Kidney (tissue), 22 donors: ENCODE measurements at regions of chr2 and their contacts with region 1.

Region 1: DNA sequence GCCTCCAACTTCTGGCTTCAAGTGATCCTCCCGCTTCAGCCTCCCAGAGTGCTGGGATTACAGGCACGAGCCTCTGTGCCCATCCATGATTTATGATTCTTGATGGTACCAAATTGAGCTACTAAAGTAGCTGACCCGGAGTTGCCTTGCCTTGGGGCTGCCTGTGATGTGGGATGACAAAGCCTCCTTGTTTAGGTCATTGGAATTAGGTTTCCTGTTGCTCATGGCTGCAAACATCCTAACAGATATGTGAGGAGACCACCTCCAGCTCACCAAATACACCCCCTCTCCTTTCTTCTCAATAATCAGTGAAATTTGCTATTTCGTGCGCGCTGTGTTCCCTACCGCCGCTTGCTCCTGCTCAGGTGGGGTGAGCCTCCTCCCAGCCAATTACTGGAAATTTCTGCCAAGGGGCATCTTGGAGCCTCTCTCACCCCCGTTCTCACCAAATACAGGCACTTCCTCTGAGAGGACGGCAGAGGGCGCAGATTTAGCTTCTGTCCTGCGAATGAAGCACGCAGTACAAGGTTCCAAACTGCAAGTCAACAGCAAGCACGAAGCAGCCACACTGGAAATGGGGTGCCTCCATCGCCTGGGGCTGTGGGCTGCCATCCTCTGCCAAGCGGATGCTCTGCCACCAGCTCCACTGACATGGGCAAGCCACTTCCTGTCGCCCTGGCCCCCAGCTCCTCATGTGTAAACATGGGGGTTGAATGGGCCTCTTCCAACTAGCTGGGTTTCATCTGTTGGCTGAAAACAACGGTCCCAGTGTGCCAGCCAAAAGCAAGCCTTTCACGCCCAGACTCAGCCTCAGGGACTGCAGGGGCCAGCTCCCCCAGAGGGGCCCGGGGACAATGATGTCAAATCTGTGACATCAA is 71.7 kb downstream of the NCAPH start:
- DNase-seq: peak in 4 of 5 donors; percentile 71 to 90 (median 75)
- H3K4me3 ChIP-seq: no peak overlapping the region
- H3K27ac ChIP-seq: no peak overlapping the region
- H3K4me1 ChIP-seq: peaks cover 5 to 14% (median 7%) of the 10 kb centered on the region in 3 donors
- H3K27me3 ChIP-seq: no peaks in the 10 kb centered on the region
- CTCF ChIP-seq: peak; percentile 91

Region 2: DNA sequence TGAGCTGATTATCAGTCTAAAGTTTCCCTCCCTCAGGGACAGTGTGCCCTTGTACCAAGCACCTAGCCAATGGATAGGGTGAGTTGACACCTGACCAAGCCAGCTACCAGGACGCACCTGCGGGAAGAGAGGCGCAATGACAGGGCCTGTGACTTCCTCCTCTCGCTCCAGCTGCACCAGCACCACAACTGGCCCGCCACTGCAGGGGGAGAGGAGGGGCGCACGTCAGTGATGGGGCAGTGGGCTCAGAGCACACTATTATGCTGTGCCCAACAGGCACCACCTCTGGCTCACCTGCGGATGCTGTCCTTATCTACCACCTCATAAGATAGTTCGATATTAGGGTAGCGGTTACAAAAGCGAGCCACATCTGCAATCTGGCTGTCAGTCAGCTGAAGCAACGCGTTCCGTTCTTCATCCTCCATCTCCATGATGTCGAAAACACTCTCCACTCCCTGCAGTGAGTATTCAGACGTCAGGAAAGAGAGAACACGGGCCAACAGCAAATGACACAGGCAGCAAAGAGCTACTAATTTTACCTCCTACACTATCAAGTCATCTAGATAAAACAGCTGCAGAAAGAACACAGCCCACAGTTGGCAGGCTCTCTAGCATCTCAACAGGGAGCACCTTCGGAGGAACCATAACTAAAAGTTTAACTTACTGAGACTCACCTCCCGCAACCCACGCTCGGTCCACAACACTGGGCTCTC is 130.3 kb before region 1 on chr2:
- intact Hi-C with region 1: no loop called
- DNase-seq: no peak
- H3K4me3 ChIP-seq: no peak overlapping the region
- H3K27ac ChIP-seq: no peak overlapping the region
- H3K4me1 ChIP-seq: peaks cover 0 to 11% (median 9%) of the 10 kb centered on the region in 3 donors
- H3K27me3 ChIP-seq: no peaks in the 10 kb centered on the region
- CTCF ChIP-seq: no peak

Region 3: DNA sequence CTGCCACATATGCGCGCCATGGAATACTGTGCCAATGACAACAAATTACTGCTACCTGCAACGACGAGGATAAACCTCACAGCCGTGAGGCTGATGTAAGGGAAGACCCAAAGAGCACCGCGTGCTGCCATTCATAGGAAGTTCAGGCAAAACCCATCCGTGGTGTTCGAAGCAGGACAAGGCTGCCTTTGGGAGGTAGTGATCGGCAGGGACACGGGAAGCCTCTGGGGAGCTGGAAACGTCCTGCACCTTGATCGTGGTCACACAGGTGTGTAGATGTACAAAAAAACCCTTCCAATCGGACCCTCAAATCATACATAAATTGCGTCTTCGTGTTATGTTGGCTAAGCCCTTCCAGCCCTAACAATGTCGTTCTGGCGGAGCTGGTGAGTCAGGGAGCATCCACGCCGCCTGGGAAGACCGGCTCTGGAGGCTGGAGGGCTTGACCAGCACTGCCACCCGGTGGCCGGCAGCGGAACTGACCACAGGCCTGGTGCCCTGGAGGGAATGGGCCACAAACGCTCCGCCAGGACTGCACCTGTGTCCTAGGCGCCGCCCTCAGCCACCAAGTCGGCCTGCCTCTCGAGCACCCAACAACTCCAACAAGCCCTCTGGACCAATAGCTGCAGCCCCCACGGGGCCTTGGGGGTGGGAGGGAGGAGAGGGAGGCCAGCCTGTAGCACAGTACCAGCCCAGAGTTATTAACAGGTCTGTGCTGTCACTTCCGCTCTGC is 102.0 kb after region 1 on chr2:
- intact Hi-C with region 1: loop called (anchors 10 kb)
- DNase-seq: peak; percentile 90 to 96 (median 93)
- H3K4me3 ChIP-seq: no peak overlapping the region
- H3K27ac ChIP-seq: no peak overlapping the region
- H3K4me1 ChIP-seq: peaks cover 5 to 34% (median 22%) of the 10 kb centered on the region in 3 donors
- H3K27me3 ChIP-seq: no peaks in the 10 kb centered on the region
- CTCF ChIP-seq: peak; percentile 99

Region 4: GRCh38 chr2:96523659-96524481 is 116.6 kb after region 1 on chr2:
- intact Hi-C with region 1: no loop called
- DNase-seq: peak in 2 of 5 donors; percentile 44 to 79
- H3K4me3 ChIP-seq: no peak overlapping the region
- H3K27ac ChIP-seq: no peak overlapping the region
- H3K4me1 ChIP-seq: peaks cover 0 to 3% (median 0%) of the 10 kb centered on the region in 3 donors
- H3K27me3 ChIP-seq: no peaks in the 10 kb centered on the region
- CTCF ChIP-seq: no peak